CD8-positive, alpha-beta T cell (primary cell): ENCODE measurements at regions of chr5 and their contacts with region 1.

Region 1: GRCh38 chr5:35651002-35651756 is 33.5 kb downstream of the SPEF2 start:
- DNase-seq: peak; percentile 29 to 79 (median 63)
- ATAC-seq: peak; percentile 95
- H3K4me3 ChIP-seq: no peak overlapping the region
- H3K4me3 Mint-ChIP-seq: no peak overlapping the region
- H3K27ac ChIP-seq: no peak overlapping the region
- H3K27ac Mint-ChIP-seq: peak overlapping the region; percentile 30
- H3K4me1 ChIP-seq: peaks cover 7% of the 10 kb centered on the region
- H3K4me1 Mint-ChIP-seq: peaks cover 10% of the 10 kb centered on the region
- H3K27me3 ChIP-seq: no peaks in the 10 kb centered on the region
- H3K27me3 Mint-ChIP-seq: no peaks in the 10 kb centered on the region
- CTCF ChIP-seq: peak; percentile 77

Region 2: DNA sequence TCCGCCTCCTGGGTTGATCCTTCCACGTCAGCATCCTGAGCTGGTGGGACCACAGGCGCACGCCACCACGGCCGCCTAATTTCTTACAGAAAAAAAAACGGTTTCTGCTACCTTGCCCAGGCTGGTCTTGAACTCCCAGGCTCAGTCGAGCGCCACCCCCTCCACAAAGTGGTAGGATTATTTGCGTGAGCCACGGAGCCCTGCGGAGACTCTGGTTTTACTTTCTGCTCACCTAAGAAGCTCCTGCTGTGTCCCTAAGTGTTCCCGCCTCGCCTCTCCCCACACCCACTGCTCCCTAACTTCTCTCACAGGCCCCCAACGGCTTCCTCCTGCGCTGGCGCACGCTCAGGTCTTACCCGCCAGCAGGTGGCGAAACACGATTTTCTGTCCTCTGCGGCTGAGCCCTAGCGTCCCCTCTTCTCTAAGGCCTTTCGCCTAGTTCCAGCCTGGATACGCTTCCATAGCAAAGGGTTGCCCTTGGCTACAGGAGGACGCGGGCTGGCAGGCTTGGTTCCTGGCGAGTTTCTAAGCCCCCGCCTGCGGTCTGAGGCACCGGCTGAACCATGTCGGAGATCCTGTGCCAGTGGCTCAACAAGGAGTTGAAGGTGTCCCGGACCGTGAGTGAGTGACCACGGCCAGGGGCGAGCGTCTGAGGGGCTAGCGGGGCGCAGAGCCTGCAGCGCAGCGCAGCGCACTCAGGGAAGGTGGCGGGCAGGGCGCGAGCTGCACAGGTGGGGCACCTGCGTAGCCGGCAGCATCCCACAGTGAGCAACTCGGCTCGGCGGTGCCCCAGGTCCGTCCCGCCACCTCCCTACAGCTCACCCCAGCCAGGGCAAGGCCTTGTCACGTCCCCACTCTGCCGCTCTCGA is 33.5 kb before region 1 on chr5 and contains the start of gene SPEF2:
- CTCF ChIA-PET with region 1: interaction called, 24 read pairs
- POLR2A ChIA-PET with region 1: interaction called, 3 read pairs
- intact Hi-C with region 1: loop called in 1 of 2 experiments (anchors 1 kb)
- DNase-seq: peak; percentile 54 to 90 (median 80)
- ATAC-seq: peak; percentile 84
- H3K4me3 ChIP-seq: peak within 1 kb of the TSS; percentile 84 to 88
- H3K4me3 Mint-ChIP-seq: peak within 1 kb of the TSS; percentile 91
- H3K27ac ChIP-seq: peak within 1 kb of the TSS; percentile 60 to 63
- H3K27ac Mint-ChIP-seq: peak within 1 kb of the TSS; percentile 95
- H3K4me1 ChIP-seq: peaks cover 16% of the 10 kb centered on the region
- H3K4me1 Mint-ChIP-seq: peaks cover 31% of the 10 kb centered on the region
- H3K27me3 ChIP-seq: no peaks in the 10 kb centered on the region
- H3K27me3 Mint-ChIP-seq: no peaks in the 10 kb centered on the region
- CTCF ChIP-seq: peak; percentile 78
- total RNA-seq, gene SPEF2: 3.5 to 4.7 TPM

Region 3: GRCh38 chr5:35672995-35673394 is 21.8 kb after region 1 on chr5:
- CTCF ChIA-PET with region 1: interaction called, 10 read pairs
- POLR2A ChIA-PET with region 1: interaction called, 5 read pairs
- intact Hi-C with region 1: no loop called
- DNase-seq: peak in 6 of 9 experiments; percentile 15 to 68 (median 37)
- ATAC-seq: peak; percentile 73
- H3K4me3 ChIP-seq: peak overlapping the region in 1 of 2 experiments; percentile 6
- H3K4me3 Mint-ChIP-seq: peak overlapping the region; percentile 35
- H3K27ac ChIP-seq: peak overlapping the region; percentile 23 to 56
- H3K27ac Mint-ChIP-seq: peak overlapping the region; percentile 91
- H3K4me1 ChIP-seq: peaks cover 56% of the 10 kb centered on the region
- H3K4me1 Mint-ChIP-seq: peaks cover 63% of the 10 kb centered on the region
- H3K27me3 ChIP-seq: no peaks in the 10 kb centered on the region
- H3K27me3 Mint-ChIP-seq: no peaks in the 10 kb centered on the region
- CTCF ChIP-seq: no peak

Region 4: GRCh38 chr5:35777358-35778087 is 126.3 kb after region 1 on chr5:
- CTCF ChIA-PET with region 1: interaction called, 20 read pairs
- POLR2A ChIA-PET with region 1: interaction called, 4 read pairs
- intact Hi-C with region 1: loop called (anchors 1 to 2 kb)
- DNase-seq: peak; percentile 40 to 88 (median 81)
- ATAC-seq: peak; percentile 64
- H3K4me3 ChIP-seq: no peak overlapping the region
- H3K4me3 Mint-ChIP-seq: peak overlapping the region; percentile 58
- H3K27ac ChIP-seq: no peak overlapping the region
- H3K27ac Mint-ChIP-seq: peak overlapping the region; percentile 92
- H3K4me1 ChIP-seq: peaks cover 58% of the 10 kb centered on the region
- H3K4me1 Mint-ChIP-seq: peaks cover 68% of the 10 kb centered on the region
- H3K27me3 ChIP-seq: no peaks in the 10 kb centered on the region
- H3K27me3 Mint-ChIP-seq: no peaks in the 10 kb centered on the region
- CTCF ChIP-seq: peak; percentile 79

Region 5: GRCh38 chr5:35857606-35858205 is 206.5 kb after region 1 on chr5:
- CTCF ChIA-PET with region 1: interaction called, 17 read pairs
- POLR2A ChIA-PET with region 1: interaction called, 9 read pairs
- intact Hi-C with region 1: loop called (anchors 2 to 5 kb)
- DNase-seq: peak in 3 of 9 experiments; percentile 8 to 46 (median 28)
- ATAC-seq: no peak
- H3K4me3 ChIP-seq: peak overlapping the region; percentile 66 to 80
- H3K4me3 Mint-ChIP-seq: peak overlapping the region; percentile 92
- H3K27ac ChIP-seq: peak overlapping the region; percentile 94 to 97
- H3K27ac Mint-ChIP-seq: peak overlapping the region; percentile 100
- H3K4me1 ChIP-seq: peaks cover 55% of the 10 kb centered on the region
- H3K4me1 Mint-ChIP-seq: peaks cover 70% of the 10 kb centered on the region
- H3K27me3 ChIP-seq: no peaks in the 10 kb centered on the region
- H3K27me3 Mint-ChIP-seq: no peaks in the 10 kb centered on the region
- CTCF ChIP-seq: no peak